Activated CD4-positive, alpha-beta memory T cell treated with anti-CD3 and anti-CD28 coated beads for 36 hours (primary cell): ENCODE measurements at regions of chr1 and their contacts with region 1.

Region 1: GRCh38 chr1:61851849-61852669 is 109.8 kb downstream of the PATJ start:
- DNase-seq: no peak
- H3K4me3 Mint-ChIP-seq: no peak overlapping the region
- H3K27ac Mint-ChIP-seq: no peak overlapping the region
- H3K4me1 Mint-ChIP-seq: no peaks in the 10 kb centered on the region
- H3K27me3 Mint-ChIP-seq: no peaks in the 10 kb centered on the region

Region 2: DNA sequence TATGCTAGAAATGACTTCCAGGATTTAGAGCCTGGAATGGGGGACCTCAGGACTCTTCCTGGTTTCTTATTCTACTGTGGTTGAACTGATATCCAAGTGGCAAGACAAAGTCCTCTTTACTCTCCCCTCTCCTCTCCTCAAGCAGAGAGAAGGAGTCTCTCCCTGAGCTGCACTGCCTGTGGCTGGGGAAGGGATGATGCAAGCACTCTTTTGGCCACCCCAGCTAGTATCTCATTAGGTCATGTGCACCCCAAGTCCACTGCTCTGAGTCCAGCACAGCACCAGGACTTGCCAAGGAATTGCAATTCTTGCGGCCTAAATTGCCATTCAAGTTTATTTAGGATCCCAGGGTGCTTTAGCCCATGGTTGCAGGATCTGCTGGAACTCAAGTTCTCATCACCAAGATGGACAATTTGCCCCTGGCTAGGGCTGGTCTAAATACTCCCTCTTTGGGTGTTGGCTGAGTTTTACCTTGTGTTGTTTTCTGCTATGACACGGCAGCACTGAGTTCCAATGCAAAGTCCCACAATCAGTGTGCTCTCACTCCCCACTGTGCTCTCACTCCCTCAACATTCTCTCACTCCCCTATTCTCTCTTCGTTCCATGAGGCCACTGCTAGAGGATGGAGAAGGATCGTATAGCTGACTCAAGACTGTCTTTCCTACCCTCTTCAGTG is 299.3 kb before region 1 on chr1:
- CTCF ChIA-PET with region 1: interaction called, 4 read pairs
- POLR2A ChIA-PET with region 1: no interaction called
- intact Hi-C with region 1: loop called (anchors 1 kb)
- DNase-seq: no peak
- H3K4me3 Mint-ChIP-seq: no peak overlapping the region
- H3K27ac Mint-ChIP-seq: no peak overlapping the region
- H3K4me1 Mint-ChIP-seq: no peaks in the 10 kb centered on the region
- H3K27me3 Mint-ChIP-seq: peaks cover 4% of the 10 kb centered on the region

Region 3: GRCh38 chr1:61641578-61642336 is 210.3 kb before region 1 on chr1:
- CTCF ChIA-PET with region 1: interaction called, 5 read pairs
- POLR2A ChIA-PET with region 1: no interaction called
- intact Hi-C with region 1: loop called (anchors 1 kb)
- DNase-seq: peak; percentile 76
- H3K4me3 Mint-ChIP-seq: peak overlapping the region; percentile 51
- H3K27ac Mint-ChIP-seq: no peak overlapping the region
- H3K4me1 Mint-ChIP-seq: peaks cover 9% of the 10 kb centered on the region
- H3K27me3 Mint-ChIP-seq: no peaks in the 10 kb centered on the region

Region 4: GRCh38 chr1:61724813-61725694 is 127.0 kb before region 1 on chr1 and contains the start of gene TM2D1:
- CTCF ChIA-PET with region 1: interaction called, 7 read pairs
- POLR2A ChIA-PET with region 1: no interaction called
- intact Hi-C with region 1: loop called (anchors 10 kb)
- DNase-seq: peak; percentile 93
- H3K4me3 Mint-ChIP-seq: peak within 1 kb of the TSS; percentile 98
- H3K27ac Mint-ChIP-seq: peak within 1 kb of the TSS; percentile 99
- H3K4me1 Mint-ChIP-seq: peaks cover 18% of the 10 kb centered on the region
- H3K27me3 Mint-ChIP-seq: no peaks in the 10 kb centered on the region
- total RNA-seq, gene TM2D1: 29.7 to 34.3 TPM